ENCODE measurements at regions of chr17 and their contacts with region 1.

Region 1: DNA sequence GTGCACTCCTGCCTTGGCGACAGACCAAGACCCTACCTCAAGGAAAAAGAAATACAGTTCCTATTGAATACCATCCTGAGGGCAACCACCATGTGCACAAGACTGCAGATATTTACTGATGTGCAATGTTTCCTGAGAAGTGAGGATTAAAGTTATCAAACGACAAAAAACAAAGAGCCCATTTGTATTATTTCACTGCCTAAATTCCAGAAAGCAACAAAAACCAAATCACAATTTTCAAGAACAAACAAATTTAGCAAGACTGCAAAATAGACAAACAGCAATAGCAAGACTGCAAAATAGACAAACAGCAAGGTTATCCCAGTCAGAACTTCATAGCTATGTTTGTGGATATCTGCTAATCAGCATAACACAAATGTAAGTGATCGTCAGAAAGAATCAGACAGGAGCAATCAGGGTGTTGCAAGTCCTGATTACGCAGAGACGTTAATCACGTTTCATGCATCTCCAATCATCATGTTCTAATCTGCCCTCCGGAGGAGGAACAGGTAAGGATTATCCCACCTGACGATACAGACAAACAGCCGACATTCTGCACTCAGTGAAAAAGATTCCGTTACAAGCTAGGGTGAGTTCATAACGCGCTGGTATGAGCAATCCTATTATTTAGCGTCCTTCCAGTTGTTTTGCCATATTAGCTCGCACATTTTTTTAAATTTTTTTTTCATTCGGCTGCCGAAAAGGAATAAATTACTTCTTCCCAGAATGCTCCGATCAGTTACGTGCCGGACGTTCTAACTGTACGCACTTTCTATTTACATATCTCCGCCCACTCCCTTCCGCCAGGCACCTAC is 2.9 kb downstream of the TMEM107 start:
- DNase-seq: peak; percentile 74 to 85
- ATAC-seq: peak; percentile 95 to 96
- H3K4me3 ChIP-seq: peak overlapping the region; percentile 29 to 54 (median 45)
- H3K27ac ChIP-seq: peak overlapping the region; percentile 77 to 91 (median 85)
- H3K4me1 ChIP-seq: peaks cover 8 to 25% of the 10 kb centered on the region in 2 donors
- H3K27me3 ChIP-seq: no peaks in the 10 kb centered on the region
- CTCF ChIP-seq: peak in 1 of 5 experiments; percentile 9
- POLR2A ChIP-seq: peak; percentile 99 to 100

Region 2: DNA sequence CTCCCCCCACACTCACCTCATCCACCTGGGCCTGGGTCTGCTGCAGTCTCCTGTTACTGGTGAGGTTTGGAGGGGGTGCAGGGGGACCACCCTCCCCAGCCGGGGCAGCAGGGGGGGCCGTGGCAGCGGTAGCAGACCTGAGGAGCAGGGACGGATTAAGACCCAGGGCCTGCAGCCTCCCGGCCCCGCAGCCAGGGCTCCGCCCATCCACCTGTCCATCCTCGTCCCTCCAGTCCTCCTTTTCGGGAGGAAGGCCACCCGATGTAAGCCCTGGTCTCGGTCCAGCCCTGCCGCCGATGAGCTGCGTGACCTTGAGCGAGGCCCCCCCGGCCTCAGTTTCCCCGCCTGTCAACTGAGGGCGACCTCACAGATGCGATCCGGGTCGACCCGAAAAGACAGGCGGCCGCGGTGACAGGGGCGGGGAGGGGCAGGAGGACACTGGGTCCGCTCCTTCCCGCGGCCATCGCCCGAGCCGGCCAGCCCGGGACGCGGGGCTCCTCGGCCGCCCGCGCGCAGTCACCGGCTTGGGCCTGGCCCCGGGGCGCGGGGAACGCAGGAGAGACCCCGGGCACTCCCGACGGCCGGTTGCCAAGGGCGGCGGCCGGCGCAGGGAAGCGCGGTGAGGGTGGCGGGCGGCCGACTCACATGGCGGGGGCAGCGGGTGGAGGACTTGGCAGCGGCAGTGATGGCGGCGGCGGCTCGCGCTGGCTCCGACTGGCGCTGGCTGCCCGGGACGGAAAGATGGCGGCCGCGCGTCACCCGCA is 10.8 kb before region 1 on chr17 and contains the start of gene VAMP2:
- in situ Hi-C with region 1: no loop called
- intact Hi-C with region 1: loop called (anchors 1 kb)
- DNase-seq: peak in 1 of 2 donors; percentile 79
- ATAC-seq: peak; percentile 50 to 55
- H3K4me3 ChIP-seq: peak within 1 kb of the TSS; percentile 74 to 92 (median 78)
- H3K27ac ChIP-seq: peak within 1 kb of the TSS; percentile 98 to 100 (median 99)
- H3K4me1 ChIP-seq: peaks cover 38 to 49% of the 10 kb centered on the region in 2 donors
- H3K27me3 ChIP-seq: no peaks in the 10 kb centered on the region
- CTCF ChIP-seq: peak in 3 of 5 experiments; percentile 25 to 50 (median 35)
- POLR2A ChIP-seq: peak; percentile 90 to 91
- total RNA-seq, gene VAMP2: 10.9 to 37.0 (median 25.7) TPM

Region 3: GRCh38 chr17:8189711-8190477 is 16.6 kb after region 1 on chr17 and contains the start of gene BORCS6:
- in situ Hi-C with region 1: no loop called
- intact Hi-C with region 1: loop called (anchors 1 kb)
- DNase-seq: peak; percentile 99
- ATAC-seq: peak; percentile 68 to 69
- H3K4me3 ChIP-seq: peak within 1 kb of the TSS; percentile 59 to 98 (median 84)
- H3K27ac ChIP-seq: peak within 1 kb of the TSS; percentile 86 to 99 (median 97)
- H3K4me1 ChIP-seq: peaks cover 37 to 42% of the 10 kb centered on the region in 2 donors
- H3K27me3 ChIP-seq: no peaks in the 10 kb centered on the region
- CTCF ChIP-seq: peak in 1 of 5 experiments; percentile 19
- POLR2A ChIP-seq: peak; percentile 83 to 91
- total RNA-seq, gene BORCS6: 16.2 to 34.5 (median 26.2) TPM